H1 (cell line): ENCODE measurements at regions of chr6 and their contacts with region 1.

Region 1: DNA sequence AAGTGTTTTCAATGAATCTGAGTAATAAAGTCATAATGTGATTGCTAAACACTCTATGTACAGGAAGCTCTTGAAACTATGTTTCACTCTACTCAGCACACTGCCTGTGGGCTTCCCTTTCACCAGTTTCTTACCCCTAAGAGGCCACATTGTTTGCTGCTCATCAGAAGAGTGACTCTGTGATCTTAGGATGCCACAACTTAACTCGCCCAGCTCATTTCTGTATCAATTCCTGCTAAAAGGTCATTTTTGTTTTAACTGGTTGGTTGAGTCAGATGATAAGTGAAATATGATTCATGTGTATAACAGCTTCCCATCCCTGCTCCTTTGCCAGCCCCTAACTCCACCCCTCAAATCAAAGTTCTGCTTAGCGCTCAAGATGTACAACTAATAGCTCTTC is 9.8 kb upstream of the NDUFAF4 start:
- DNase-seq: no peak
- H3K4me3 ChIP-seq: no peak overlapping the region
- H3K27ac ChIP-seq: no peak overlapping the region
- H3K4me1 ChIP-seq: no peaks in the 10 kb centered on the region
- H3K27me3 ChIP-seq: peaks cover 0 to 1% (median 0%) of the 10 kb centered on the region in 4 experiments; a peak in 1 of 7 replicates
- CTCF ChIP-seq: no peak
- EP300 ChIP-seq: no peak
- POLR2A ChIP-seq: no peak
- RAD21 ChIP-seq: no peak

Region 2: GRCh38 chr6:97059473-97059872 is 152.0 kb after region 1 on chr6:
- CTCF ChIA-PET with region 1: interaction called, 36 read pairs
- POLR2A ChIA-PET with region 1: no interaction called
- DNase-seq: no peak
- H3K4me3 ChIP-seq: no peak overlapping the region
- H3K27ac ChIP-seq: no peak overlapping the region
- H3K4me1 ChIP-seq: peaks cover 0 to under 1% (median 0%) of the 10 kb centered on the region in 4 experiments; a peak in 1 of 7 replicates
- H3K27me3 ChIP-seq: no peaks in the 10 kb centered on the region
- CTCF ChIP-seq: peak in 2 of 3 experiments; percentile 18 to 21; a peak in 2 of 4 replicates
- EP300 ChIP-seq: no peak
- POLR2A ChIP-seq: no peak
- RAD21 ChIP-seq: peak; percentile 62 to 75

Region 3: GRCh38 chr6:97110626-97111025 is 203.1 kb after region 1 on chr6:
- CTCF ChIA-PET with region 1: no interaction called
- POLR2A ChIA-PET with region 1: no interaction called
- DNase-seq: no peak
- H3K4me3 ChIP-seq: no peak overlapping the region
- H3K27ac ChIP-seq: no peak overlapping the region
- H3K4me1 ChIP-seq: no peaks in the 10 kb centered on the region
- H3K27me3 ChIP-seq: no peaks in the 10 kb centered on the region
- CTCF ChIP-seq: no peak
- EP300 ChIP-seq: no peak
- POLR2A ChIP-seq: no peak
- RAD21 ChIP-seq: no peak